Naive thymus-derived CD4-positive, alpha-beta T cell (primary cell): ENCODE measurements at regions of chr10 and their contacts with region 1.

Region 1: GRCh38 chr10:72215652-72216549 is at the starts of genes ANAPC16 and ASCC1:
- DNase-seq: peak; percentile 90 to 99 (median 97)
- ATAC-seq: peak; percentile 95
- H3K4me3 ChIP-seq: peak within 1 kb of the TSS; percentile 66
- H3K4me3 Mint-ChIP-seq: peak within 1 kb of the TSS; percentile 84 to 100 (median 97)
- H3K27ac ChIP-seq: peak within 1 kb of the TSS; percentile 95
- H3K27ac Mint-ChIP-seq: peak within 1 kb of the TSS; percentile 93 to 100 (median 99)
- H3K4me1 ChIP-seq: peaks cover 22 to 49% of the 10 kb centered on the region in 2 donors
- H3K4me1 Mint-ChIP-seq: peaks cover 14 to 62% (median 47%) of the 10 kb centered on the region in 7 donors
- H3K27me3 ChIP-seq: no peaks in the 10 kb centered on the region
- H3K27me3 Mint-ChIP-seq: no peaks in the 10 kb centered on the region
- total RNA-seq, gene ANAPC16: 85.5 to 131 (median 105) TPM
- total RNA-seq, gene ASCC1: 19.4 to 33.1 (median 24.2) TPM

Region 2: DNA sequence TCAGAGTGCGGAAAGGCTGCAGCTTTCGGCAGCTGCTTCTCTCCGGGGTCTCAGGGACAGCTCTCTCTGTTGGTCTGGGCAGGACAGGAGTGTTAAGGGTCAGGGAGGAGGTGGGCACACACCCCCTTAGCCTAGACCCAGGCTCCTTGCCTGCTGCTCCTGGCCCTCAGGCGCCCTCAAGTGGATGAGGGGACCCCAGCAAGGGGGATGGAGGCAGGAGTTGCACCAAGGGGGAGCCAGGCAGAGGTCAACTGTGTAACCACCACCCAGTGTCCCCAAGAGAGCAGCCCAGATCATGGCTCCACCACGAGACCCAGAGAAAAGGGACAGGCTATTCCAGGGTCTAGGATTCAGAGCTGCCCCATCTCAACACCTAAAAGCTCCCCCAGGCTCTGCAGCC is 154.4 kb before region 1 on chr10:
- CTCF ChIA-PET with region 1: no interaction called
- POLR2A ChIA-PET with region 1: interaction called, 4 read pairs
- intact Hi-C with region 1: loop called in 1 of 2 experiments (anchors 5 kb)
- DNase-seq: no peak
- ATAC-seq: peak; percentile 22
- H3K4me3 ChIP-seq: no peak overlapping the region
- H3K4me3 Mint-ChIP-seq: peak overlapping the region in 2 of 10 donors; percentile 32 to 66
- H3K27ac ChIP-seq: no peak overlapping the region
- H3K27ac Mint-ChIP-seq: peak overlapping the region; percentile 34 to 91 (median 80)
- H3K4me1 ChIP-seq: no peaks in the 10 kb centered on the region
- H3K4me1 Mint-ChIP-seq: peaks cover 0 to 37% (median 24%) of the 10 kb centered on the region in 7 donors
- H3K27me3 ChIP-seq: no peaks in the 10 kb centered on the region
- H3K27me3 Mint-ChIP-seq: no peaks in the 10 kb centered on the region

Region 3: GRCh38 chr10:72133517-72133916 is 82.4 kb before region 1 on chr10:
- CTCF ChIA-PET with region 1: interaction called, 6 read pairs
- POLR2A ChIA-PET with region 1: interaction called, 21 read pairs
- intact Hi-C with region 1: no loop called
- DNase-seq: no peak
- ATAC-seq: peak; percentile 74
- H3K4me3 ChIP-seq: no peak overlapping the region
- H3K4me3 Mint-ChIP-seq: peak overlapping the region in 1 of 10 donors; percentile 56
- H3K27ac ChIP-seq: no peak overlapping the region
- H3K27ac Mint-ChIP-seq: peak overlapping the region; percentile 16 to 94 (median 83)
- H3K4me1 ChIP-seq: peaks cover 0 to 19% of the 10 kb centered on the region in 2 donors
- H3K4me1 Mint-ChIP-seq: peaks cover 22 to 46% (median 37%) of the 10 kb centered on the region in 7 donors
- H3K27me3 ChIP-seq: no peaks in the 10 kb centered on the region
- H3K27me3 Mint-ChIP-seq: no peaks in the 10 kb centered on the region

Region 4: GRCh38 chr10:72260588-72261322 is 44.9 kb after region 1 on chr10:
- CTCF ChIA-PET with region 1: interaction called, 3 read pairs
- POLR2A ChIA-PET with region 1: interaction called, 10 read pairs
- intact Hi-C with region 1: loop called in 1 of 2 experiments (anchors 1 kb)
- DNase-seq: peak; percentile 55 to 89 (median 63)
- ATAC-seq: peak; percentile 85
- H3K4me3 ChIP-seq: peak overlapping the region; percentile 68
- H3K4me3 Mint-ChIP-seq: peak overlapping the region; percentile 83 to 93 (median 90)
- H3K27ac ChIP-seq: peak overlapping the region; percentile 78
- H3K27ac Mint-ChIP-seq: peak overlapping the region; percentile 87 to 97 (median 94)
- H3K4me1 ChIP-seq: peaks cover 45 to 63% of the 10 kb centered on the region in 2 donors
- H3K4me1 Mint-ChIP-seq: peaks cover 32 to 83% (median 67%) of the 10 kb centered on the region in 7 donors
- H3K27me3 ChIP-seq: no peaks in the 10 kb centered on the region
- H3K27me3 Mint-ChIP-seq: no peaks in the 10 kb centered on the region

Region 5: GRCh38 chr10:72319416-72320254 is 103.7 kb after region 1 on chr10:
- CTCF ChIA-PET with region 1: interaction called, 5 read pairs
- POLR2A ChIA-PET with region 1: interaction called, 9 read pairs
- intact Hi-C with region 1: loop called in 1 of 2 experiments (anchors 1 kb)
- DNase-seq: peak; percentile 82 to 90 (median 88)
- ATAC-seq: peak; percentile 85
- H3K4me3 ChIP-seq: peak overlapping the region; percentile 60
- H3K4me3 Mint-ChIP-seq: peak overlapping the region; percentile 69 to 89 (median 82)
- H3K27ac ChIP-seq: peak overlapping the region; percentile 94
- H3K27ac Mint-ChIP-seq: peak overlapping the region; percentile 90 to 98 (median 97)
- H3K4me1 ChIP-seq: peaks cover 61 to 90% of the 10 kb centered on the region in 2 donors
- H3K4me1 Mint-ChIP-seq: peaks cover 58 to 90% (median 83%) of the 10 kb centered on the region in 7 donors
- H3K27me3 ChIP-seq: no peaks in the 10 kb centered on the region
- H3K27me3 Mint-ChIP-seq: no peaks in the 10 kb centered on the region

Region 6: GRCh38 chr10:72354478-72355213 is 138.7 kb after region 1 on chr10 and contains the start of gene DNAJB12:
- CTCF ChIA-PET with region 1: no interaction called
- POLR2A ChIA-PET with region 1: interaction called, 6 read pairs
- intact Hi-C with region 1: loop called in 1 of 2 experiments (anchors 1 kb)
- DNase-seq: peak; percentile 90 to 96 (median 94)
- ATAC-seq: peak; percentile 94
- H3K4me3 ChIP-seq: peak within 1 kb of the TSS; percentile 98
- H3K4me3 Mint-ChIP-seq: peak within 1 kb of the TSS; percentile 93 to 99 (median 96)
- H3K27ac ChIP-seq: peak within 1 kb of the TSS; percentile 88
- H3K27ac Mint-ChIP-seq: peak within 1 kb of the TSS; percentile 93 to 100 (median 97)
- H3K4me1 ChIP-seq: peaks cover 8 to 13% of the 10 kb centered on the region in 2 donors
- H3K4me1 Mint-ChIP-seq: peaks cover 31 to 59% (median 46%) of the 10 kb centered on the region in 7 donors
- H3K27me3 ChIP-seq: no peaks in the 10 kb centered on the region
- H3K27me3 Mint-ChIP-seq: no peaks in the 10 kb centered on the region
- total RNA-seq, gene DNAJB12: 24.6 to 40.5 (median 36.2) TPM